Activated CD8-positive, alpha-beta T cell treated with anti-CD3 and anti-CD28 coated beads, Interleukin-2, amount 10 ng/mL, durations not matched to agents 7 days and 5 days (primary cell): ENCODE measurements at regions of chr10 and their contacts with region 1.

Region 1: DNA sequence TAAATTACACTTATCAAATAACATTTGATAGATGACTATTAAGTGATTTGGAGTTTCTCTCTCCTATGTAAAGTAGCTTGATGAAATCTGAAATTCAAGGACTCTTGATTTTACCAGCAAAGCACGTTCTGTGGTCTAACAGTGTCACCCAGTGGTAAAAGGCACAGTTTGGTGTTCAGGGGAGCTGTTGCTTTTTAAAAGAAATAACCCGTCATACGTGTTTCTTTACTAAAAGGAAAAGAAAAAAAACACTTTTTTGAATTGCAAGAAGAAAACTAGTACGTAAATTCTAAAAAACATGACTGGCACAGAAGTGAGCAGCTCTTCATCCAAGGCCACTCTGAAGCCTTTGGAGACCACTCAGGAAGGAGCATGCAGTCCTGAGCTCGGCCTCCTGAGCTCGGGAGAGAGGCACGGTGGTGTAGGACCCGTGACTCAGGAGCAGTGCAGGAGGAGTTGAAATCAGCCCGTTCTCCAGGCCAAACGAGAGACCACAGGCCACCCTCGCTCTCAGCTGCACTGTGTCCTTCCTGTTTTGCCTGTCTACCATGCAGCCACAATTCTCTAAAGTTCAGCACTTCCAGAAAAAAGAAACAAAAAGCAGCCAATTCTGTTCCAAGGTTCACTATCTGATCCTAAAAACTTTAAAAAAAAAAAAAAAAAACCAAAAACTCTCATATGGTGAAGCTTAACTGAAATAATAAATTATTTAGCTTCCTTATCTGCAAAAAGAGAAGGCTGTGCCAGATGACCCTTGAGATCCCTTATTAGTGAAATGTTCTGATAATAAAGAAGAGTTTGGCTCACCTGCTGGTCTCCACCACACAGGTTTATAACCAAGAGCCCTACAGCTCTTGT is 212.6 kb upstream of the FRMD4A start:
- DNase-seq: peak; percentile 65
- ATAC-seq: peak; percentile 80
- H3K4me3 Mint-ChIP-seq: peak overlapping the region; percentile 56
- H3K27ac Mint-ChIP-seq: peak overlapping the region; percentile 79
- H3K4me1 Mint-ChIP-seq: peaks cover 77% of the 10 kb centered on the region
- H3K27me3 Mint-ChIP-seq: no peaks in the 10 kb centered on the region

Region 2: GRCh38 chr10:14325325-14325955 is 217.8 kb before region 1 on chr10:
- CTCF ChIA-PET with region 1: no interaction called
- POLR2A ChIA-PET with region 1: no interaction called
- DNase-seq: peak; percentile 65
- ATAC-seq: no peak
- H3K4me3 Mint-ChIP-seq: no peak overlapping the region
- H3K27ac Mint-ChIP-seq: no peak overlapping the region
- H3K4me1 Mint-ChIP-seq: no peaks in the 10 kb centered on the region
- H3K27me3 Mint-ChIP-seq: peaks cover 28% of the 10 kb centered on the region

Region 3: GRCh38 chr10:14429043-14429700 is 114.1 kb before region 1 on chr10:
- CTCF ChIA-PET with region 1: no interaction called
- POLR2A ChIA-PET with region 1: no interaction called
- DNase-seq: no peak
- ATAC-seq: no peak
- H3K4me3 Mint-ChIP-seq: no peak overlapping the region
- H3K27ac Mint-ChIP-seq: no peak overlapping the region
- H3K4me1 Mint-ChIP-seq: no peaks in the 10 kb centered on the region
- H3K27me3 Mint-ChIP-seq: peaks cover 14% of the 10 kb centered on the region

Region 4: GRCh38 chr10:14500172-14500765 is 43.0 kb before region 1 on chr10:
- CTCF ChIA-PET with region 1: interaction called, 24 read pairs
- POLR2A ChIA-PET with region 1: no interaction called
- DNase-seq: no peak
- ATAC-seq: no peak
- H3K4me3 Mint-ChIP-seq: no peak overlapping the region
- H3K27ac Mint-ChIP-seq: no peak overlapping the region
- H3K4me1 Mint-ChIP-seq: peaks cover 17% of the 10 kb centered on the region
- H3K27me3 Mint-ChIP-seq: peaks cover 13% of the 10 kb centered on the region

Region 5: GRCh38 chr10:14528450-14528849 is 14.8 kb before region 1 on chr10:
- CTCF ChIA-PET with region 1: interaction called, 26 read pairs
- POLR2A ChIA-PET with region 1: interaction called, 4 read pairs
- DNase-seq: peak; percentile 54
- ATAC-seq: peak; percentile 96
- H3K4me3 Mint-ChIP-seq: peak overlapping the region; percentile 16
- H3K27ac Mint-ChIP-seq: peak overlapping the region; percentile 13
- H3K4me1 Mint-ChIP-seq: peaks cover 84% of the 10 kb centered on the region
- H3K27me3 Mint-ChIP-seq: no peaks in the 10 kb centered on the region

Region 6: GRCh38 chr10:14564268-14564744 is 21.0 kb after region 1 on chr10:
- CTCF ChIA-PET with region 1: interaction called, 17 read pairs
- POLR2A ChIA-PET with region 1: interaction called, 5 read pairs
- DNase-seq: no peak
- ATAC-seq: peak; percentile 32
- H3K4me3 Mint-ChIP-seq: peak overlapping the region; percentile 67
- H3K27ac Mint-ChIP-seq: peak overlapping the region; percentile 87
- H3K4me1 Mint-ChIP-seq: peaks cover 88% of the 10 kb centered on the region
- H3K27me3 Mint-ChIP-seq: no peaks in the 10 kb centered on the region

Region 7: GRCh38 chr10:14837757-14838581 is 294.7 kb after region 1 on chr10 and contains the starts of genes CDNF, HSPA14 and MSANTD7:
- CTCF ChIA-PET with region 1: interaction called, 19 read pairs
- POLR2A ChIA-PET with region 1: interaction called, 8 read pairs
- DNase-seq: peak; percentile 100
- ATAC-seq: peak; percentile 94
- H3K4me3 Mint-ChIP-seq: peak within 1 kb of the TSS; percentile 90
- H3K27ac Mint-ChIP-seq: peak within 1 kb of the TSS; percentile 96
- H3K4me1 Mint-ChIP-seq: peaks cover 24% of the 10 kb centered on the region
- H3K27me3 Mint-ChIP-seq: no peaks in the 10 kb centered on the region
- total RNA-seq, gene CDNF: 0.89 to 1.2 TPM
- total RNA-seq, gene HSPA14: 28.9 to 31.4 TPM
- total RNA-seq, gene MSANTD7: 21.8 to 22.5 TPM